ENCODE measurements at regions of chr3 and their contacts with region 1.

Region 1: GRCh38 chr3:56997675-56998074 is 62.8 kb upstream of the SPATA12 start:
- DNase-seq: no peak
- H3K4me3 ChIP-seq: no peak overlapping the region
- H3K27ac ChIP-seq: peak overlapping the region in 1 of 2 donors; percentile 11
- H3K4me1 ChIP-seq: no peaks in the 10 kb centered on the region
- H3K27me3 ChIP-seq: no peaks in the 10 kb centered on the region
- CTCF ChIP-seq: no peak

Region 2: GRCh38 chr3:56890448-56891091 is 107.1 kb before region 1 on chr3:
- intact Hi-C with region 1: no loop called
- DNase-seq: no peak
- H3K4me3 ChIP-seq: no peak overlapping the region
- H3K27ac ChIP-seq: no peak overlapping the region
- H3K4me1 ChIP-seq: peaks cover 0 to 6% of the 10 kb centered on the region in 2 donors
- H3K27me3 ChIP-seq: no peaks in the 10 kb centered on the region
- CTCF ChIP-seq: no peak

Region 3: GRCh38 chr3:57007513-57008460 is 10.1 kb after region 1 on chr3:
- intact Hi-C with region 1: loop called (anchors 1 kb)
- DNase-seq: peak; percentile 55 to 90
- H3K4me3 ChIP-seq: peak overlapping the region; percentile 33 to 36
- H3K27ac ChIP-seq: peak overlapping the region; percentile 87
- H3K4me1 ChIP-seq: peaks cover 12 to 24% of the 10 kb centered on the region in 2 donors
- H3K27me3 ChIP-seq: no peaks in the 10 kb centered on the region
- CTCF ChIP-seq: no peak

Region 4: GRCh38 chr3:57078344-57078634 is 80.6 kb after region 1 on chr3:
- intact Hi-C with region 1: loop called (anchors 2 kb)
- DNase-seq: peak in 1 of 2 donors; percentile 80
- H3K4me3 ChIP-seq: peak overlapping the region; percentile 85 to 94
- H3K27ac ChIP-seq: peak overlapping the region in 1 of 2 donors; percentile 10
- H3K4me1 ChIP-seq: peaks cover 3 to 8% of the 10 kb centered on the region in 2 donors
- H3K27me3 ChIP-seq: no peaks in the 10 kb centered on the region
- CTCF ChIP-seq: peak in 1 of 3 experiments; percentile 2